OCI-LY7 (cell line): ENCODE measurements at regions of chr2 and their contacts with region 1.

Region 1: DNA sequence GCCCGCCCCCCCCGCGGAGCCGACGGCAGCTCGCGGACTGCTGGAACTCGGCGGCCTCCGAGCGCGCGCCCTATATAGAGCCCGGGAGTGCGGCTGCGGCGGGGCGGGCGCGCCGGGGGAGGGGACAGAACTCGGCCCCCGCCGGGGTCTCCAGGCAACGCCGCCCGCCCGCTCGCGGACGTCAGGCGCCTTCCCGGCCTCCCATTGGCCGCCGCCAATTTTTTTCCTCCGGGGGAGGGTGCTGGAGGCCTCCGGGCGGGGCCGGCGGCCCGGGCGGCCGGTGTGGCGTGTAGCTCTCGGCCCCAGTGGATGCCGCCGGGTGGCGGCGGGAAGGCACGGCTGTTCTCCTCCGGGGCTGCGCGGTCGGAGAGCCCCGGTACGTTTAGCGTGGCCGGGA is at the start of gene ZFP36L2:
- DNase-seq: peak; percentile 97
- H3K4me3 ChIP-seq: peak within 1 kb of the TSS; percentile 89
- H3K27ac ChIP-seq: peak within 1 kb of the TSS; percentile 84
- H3K4me1 ChIP-seq: peaks cover 71% of the 10 kb centered on the region
- CTCF ChIP-seq: no peak
- total RNA-seq, gene ZFP36L2: 6.8 and 7.0 TPM in 2 replicates

Region 2: GRCh38 chr2:42828487-42829425 is 397.8 kb before region 1 on chr2:
- CTCF ChIA-PET with region 1: no interaction called
- POLR2A ChIA-PET with region 1: no interaction called
- intact Hi-C with region 1: loop called (anchors 5 kb)
- DNase-seq: peak; percentile 76
- H3K4me3 ChIP-seq: no peak overlapping the region
- H3K27ac ChIP-seq: no peak overlapping the region
- H3K4me1 ChIP-seq: no peaks in the 10 kb centered on the region
- CTCF ChIP-seq: peak; percentile 94

Region 3: GRCh38 chr2:42974721-42975717 is 251.5 kb before region 1 on chr2:
- CTCF ChIA-PET with region 1: no interaction called
- POLR2A ChIA-PET with region 1: interaction called, 3 read pairs
- intact Hi-C with region 1: loop called (anchors 2 kb)
- DNase-seq: peak; percentile 43
- H3K4me3 ChIP-seq: no peak overlapping the region
- H3K27ac ChIP-seq: no peak overlapping the region
- H3K4me1 ChIP-seq: peaks cover 9% of the 10 kb centered on the region
- CTCF ChIP-seq: peak; percentile 78

Region 4: GRCh38 chr2:43131024-43131889 is 95.3 kb before region 1 on chr2:
- CTCF ChIA-PET with region 1: interaction called, 30 read pairs
- POLR2A ChIA-PET with region 1: interaction called, 50 read pairs
- intact Hi-C with region 1: loop called (anchors 1 kb)
- DNase-seq: peak; percentile 93
- H3K4me3 ChIP-seq: peak overlapping the region; percentile 3
- H3K27ac ChIP-seq: peak overlapping the region; percentile 93
- H3K4me1 ChIP-seq: peaks cover 97% of the 10 kb centered on the region
- CTCF ChIP-seq: peak; percentile 70

Region 5: GRCh38 chr2:43484323-43484930 is 257.9 kb after region 1 on chr2:
- CTCF ChIA-PET with region 1: interaction called, 3 read pairs
- POLR2A ChIA-PET with region 1: interaction called, 5 read pairs
- intact Hi-C with region 1: loop called (anchors 1 kb)
- DNase-seq: peak; percentile 83
- H3K4me3 ChIP-seq: no peak overlapping the region
- H3K27ac ChIP-seq: no peak overlapping the region
- H3K4me1 ChIP-seq: no peaks in the 10 kb centered on the region
- CTCF ChIP-seq: peak; percentile 95